Activated naive CD8-positive, alpha-beta T cell treated with anti-CD3 and anti-CD28 coated beads, Interleukin-2, amount 10 ng/mL, durations not matched to agents 7 days and 5 days (primary cell): ENCODE measurements at regions of chr1 and their contacts with region 1.

Region 1: GRCh38 chr1:231626535-231626945 is at the start of gene DISC1:
- DNase-seq: peak; percentile 84
- ATAC-seq: peak; percentile 79
- H3K4me3 Mint-ChIP-seq: peak within 1 kb of the TSS; percentile 88
- H3K27ac Mint-ChIP-seq: peak within 1 kb of the TSS; percentile 84
- H3K4me1 Mint-ChIP-seq: peaks cover 20% of the 10 kb centered on the region
- H3K27me3 Mint-ChIP-seq: peaks cover 22% of the 10 kb centered on the region
- total RNA-seq, gene DISC1: 9.8 to 11.2 TPM

Region 2: GRCh38 chr1:231612393-231613089 is 14.0 kb before region 1 on chr1:
- POLR2A ChIA-PET with region 1: interaction called, 10 read pairs
- DNase-seq: peak; percentile 70
- ATAC-seq: peak; percentile 93
- H3K4me3 Mint-ChIP-seq: peak overlapping the region; percentile 74
- H3K27ac Mint-ChIP-seq: peak overlapping the region; percentile 88
- H3K4me1 Mint-ChIP-seq: peaks cover 47% of the 10 kb centered on the region
- H3K27me3 Mint-ChIP-seq: no peaks in the 10 kb centered on the region

Region 3: DNA sequence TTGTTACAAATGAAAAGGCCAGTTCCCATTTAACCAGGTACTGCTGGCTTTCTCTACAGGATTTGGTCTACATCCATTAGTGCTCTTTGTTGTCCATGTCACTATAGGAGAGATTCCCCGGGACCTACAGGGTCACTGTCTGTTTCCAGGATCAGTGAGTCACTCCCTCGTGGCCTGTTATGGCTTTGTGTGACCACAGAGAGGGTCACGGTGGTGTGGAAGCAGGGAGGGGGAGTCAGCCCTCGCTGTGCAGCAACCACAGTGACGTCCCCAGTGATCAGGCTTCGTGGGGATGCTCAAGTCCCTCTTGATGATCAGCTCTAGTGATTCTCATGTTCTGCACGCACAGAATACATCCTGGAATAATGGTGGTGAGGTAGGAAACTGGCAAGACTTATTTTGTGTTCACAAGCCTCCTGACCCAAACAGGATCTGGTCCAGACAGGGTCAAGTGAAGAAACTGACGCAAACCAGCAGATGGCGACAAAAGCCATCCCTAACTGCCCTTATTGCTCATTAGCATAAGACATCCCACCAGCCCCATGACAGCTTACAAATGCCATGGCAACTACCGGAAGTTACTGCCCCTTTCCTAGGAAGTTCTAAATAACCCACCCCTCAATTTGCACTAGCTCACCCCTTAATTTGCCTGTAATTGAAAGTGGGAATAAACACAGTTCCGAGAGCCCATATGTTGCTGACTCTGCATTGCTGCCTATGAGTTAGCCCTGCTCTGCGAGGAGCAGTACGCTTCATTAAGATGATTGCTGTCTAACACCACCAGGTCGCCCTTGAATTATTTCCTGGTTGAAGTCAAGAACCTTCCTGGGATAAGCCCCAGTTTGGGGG is 98.6 kb after region 1 on chr1:
- POLR2A ChIA-PET with region 1: no interaction called
- DNase-seq: no peak
- ATAC-seq: no peak
- H3K4me3 Mint-ChIP-seq: no peak overlapping the region
- H3K27ac Mint-ChIP-seq: no peak overlapping the region
- H3K4me1 Mint-ChIP-seq: peaks cover 1% of the 10 kb centered on the region
- H3K27me3 Mint-ChIP-seq: no peaks in the 10 kb centered on the region